Right ventricle myocardium superior (tissue), 1 donor: ENCODE measurements at regions of chr5 and their contacts with region 1.

Region 1: GRCh38 chr5:14871210-14872069 is at the start of gene ANKH:
- DNase-seq: peak; percentile 89
- ATAC-seq: peak; percentile 88
- total RNA-seq, gene ANKH: 144 TPM

Region 2: GRCh38 chr5:14727428-14727865 is 144.0 kb before region 1 on chr5:
- intact Hi-C with region 1: loop called (anchors 5 kb)
- DNase-seq: peak; percentile 83
- ATAC-seq: peak; percentile 83

Region 3: GRCh38 chr5:15021266-15022046 is 150.0 kb after region 1 on chr5:
- intact Hi-C with region 1: no loop called
- DNase-seq: no peak
- ATAC-seq: peak; percentile 77